ENCODE measurements at regions of chr5 and their contacts with region 1.

Region 1: GRCh38 chr5:172770675-172771438 is at the start of gene DUSP1:
- DNase-seq: peak; percentile 99
- ATAC-seq: peak; percentile 54
- H3K4me3 ChIP-seq: peak within 1 kb of the TSS; percentile 84 to 99 (median 99)
- H3K4me3 Mint-ChIP-seq: peak within 1 kb of the TSS; percentile 92
- H3K27ac ChIP-seq: peak within 1 kb of the TSS; percentile 100
- H3K27ac Mint-ChIP-seq: peak within 1 kb of the TSS; percentile 96
- H3K4me1 ChIP-seq: peaks cover 32 to 46% of the 10 kb centered on the region in 2 donors
- H3K4me1 Mint-ChIP-seq: peaks cover 70% of the 10 kb centered on the region
- H3K27me3 ChIP-seq: no peaks in the 10 kb centered on the region
- H3K27me3 Mint-ChIP-seq: no peaks in the 10 kb centered on the region
- CTCF ChIP-seq: peak; percentile 23
- total RNA-seq, gene DUSP1: 69.8 and 71.2 TPM in 2 replicates

Region 2: DNA sequence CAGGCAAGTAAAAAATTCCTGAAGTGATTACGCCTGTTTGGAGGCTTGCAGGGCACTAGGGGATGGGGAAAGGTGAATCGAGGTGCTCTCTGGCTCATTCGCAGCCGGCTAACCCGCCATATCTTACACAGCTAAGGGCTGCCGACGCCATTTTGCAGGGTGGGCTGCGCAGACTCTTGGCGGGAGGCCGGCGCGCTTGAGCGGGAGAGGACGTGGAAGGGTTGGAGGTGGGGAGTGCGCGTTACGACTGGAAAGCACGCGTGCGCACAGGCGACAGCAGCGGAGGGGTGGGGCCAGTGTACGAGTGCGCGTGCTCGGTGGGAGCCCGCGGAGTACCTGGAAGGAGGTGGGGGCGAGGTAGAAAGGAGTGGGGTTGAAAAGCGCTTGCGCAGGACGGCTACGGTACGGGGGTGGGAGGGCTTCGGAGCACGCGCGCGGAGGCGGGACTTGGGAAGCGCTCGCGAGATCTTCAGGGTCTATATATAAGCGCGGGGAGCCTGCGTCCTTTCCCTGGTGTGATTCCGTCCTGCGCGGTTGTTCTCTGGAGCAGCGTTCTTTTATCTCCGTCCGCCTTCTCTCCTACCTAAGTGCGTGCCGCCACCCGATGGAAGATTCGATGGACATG is 1383.4 kb before region 1 on chr5 and contains the start of gene NPM1:
- CTCF ChIA-PET with region 1: no interaction called
- POLR2A ChIA-PET with region 1: no interaction called
- intact Hi-C with region 1: loop called (anchors 10 kb)
- DNase-seq: peak; percentile 99
- ATAC-seq: peak; percentile 87
- H3K4me3 ChIP-seq: peak within 1 kb of the TSS; percentile 67 to 82 (median 75)
- H3K4me3 Mint-ChIP-seq: peak within 1 kb of the TSS; percentile 100
- H3K27ac ChIP-seq: peak within 1 kb of the TSS; percentile 74 to 87
- H3K27ac Mint-ChIP-seq: peak within 1 kb of the TSS; percentile 99
- H3K4me1 ChIP-seq: peaks cover 39 to 41% of the 10 kb centered on the region in 2 donors
- H3K4me1 Mint-ChIP-seq: peaks cover 51% of the 10 kb centered on the region
- H3K27me3 ChIP-seq: no peaks in the 10 kb centered on the region
- H3K27me3 Mint-ChIP-seq: peaks cover under 1% of the 10 kb centered on the region
- CTCF ChIP-seq: no peak
- total RNA-seq, gene NPM1: 819 and 920 TPM in 2 replicates

Region 3: DNA sequence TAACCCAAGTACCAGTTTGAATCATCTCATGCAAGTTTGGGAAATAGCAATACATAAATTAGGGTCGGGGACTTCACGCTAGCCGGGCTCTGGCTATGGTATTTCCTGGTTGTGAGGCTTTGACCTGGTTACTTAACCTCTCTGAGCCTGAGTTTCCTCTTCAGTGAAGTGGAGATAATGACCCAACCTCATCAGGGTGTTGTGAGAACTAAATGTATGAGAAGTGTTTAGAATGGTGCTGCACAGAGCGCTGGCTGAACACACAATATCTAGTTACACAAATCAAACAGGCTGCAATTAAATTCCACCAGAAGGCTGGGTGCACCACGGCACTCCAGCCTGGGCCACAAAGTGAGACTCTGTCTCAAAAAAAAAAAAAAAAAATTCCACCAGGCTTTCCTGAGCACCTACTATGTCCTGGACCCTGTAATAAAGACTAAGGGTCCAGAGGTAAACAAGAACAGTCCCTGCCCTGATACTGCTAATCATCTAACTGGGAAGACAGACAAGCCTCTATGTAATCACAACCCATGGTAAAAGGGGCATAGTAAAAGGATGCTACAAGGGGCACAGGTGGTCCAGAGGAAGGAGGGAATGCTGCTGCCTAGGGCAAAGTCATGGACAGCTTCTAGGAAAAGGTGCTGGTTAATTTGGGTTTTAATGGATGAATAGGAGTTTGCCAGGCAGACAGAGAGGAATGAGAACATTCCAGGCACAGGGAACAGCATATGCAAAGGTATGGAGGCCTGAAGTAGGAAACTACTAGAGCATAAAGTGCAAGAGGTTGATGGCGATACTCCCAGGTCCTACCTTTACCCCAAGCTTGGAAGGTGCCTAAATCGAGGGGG is 27.5 kb before region 1 on chr5:
- CTCF ChIA-PET with region 1: no interaction called
- POLR2A ChIA-PET with region 1: interaction called, 5 read pairs
- intact Hi-C with region 1: loop called (anchors 2 kb)
- DNase-seq: no peak
- ATAC-seq: no peak
- H3K4me3 ChIP-seq: no peak overlapping the region
- H3K4me3 Mint-ChIP-seq: peak overlapping the region; percentile 21
- H3K27ac ChIP-seq: no peak overlapping the region
- H3K27ac Mint-ChIP-seq: no peak overlapping the region
- H3K4me1 ChIP-seq: peaks cover 21 to 32% of the 10 kb centered on the region in 2 donors
- H3K4me1 Mint-ChIP-seq: peaks cover 30% of the 10 kb centered on the region
- H3K27me3 ChIP-seq: peaks cover 0 to 5% (median 0%) of the 10 kb centered on the region in 4 experiments
- H3K27me3 Mint-ChIP-seq: no peaks in the 10 kb centered on the region
- CTCF ChIP-seq: no peak

Region 4: GRCh38 chr5:172849606-172850453 is 79.0 kb after region 1 on chr5:
- CTCF ChIA-PET with region 1: interaction called, 40 read pairs
- POLR2A ChIA-PET with region 1: interaction called, 33 read pairs
- intact Hi-C with region 1: loop called (anchors 1 kb)
- DNase-seq: peak; percentile 93
- ATAC-seq: peak; percentile 84
- H3K4me3 ChIP-seq: peak overlapping the region in 4 of 5 experiments; percentile 11 to 40 (median 20)
- H3K4me3 Mint-ChIP-seq: peak overlapping the region; percentile 73
- H3K27ac ChIP-seq: peak overlapping the region; percentile 88 to 95
- H3K27ac Mint-ChIP-seq: peak overlapping the region; percentile 95
- H3K4me1 ChIP-seq: peaks cover 61 to 74% of the 10 kb centered on the region in 2 donors
- H3K4me1 Mint-ChIP-seq: peaks cover 80% of the 10 kb centered on the region
- H3K27me3 ChIP-seq: no peaks in the 10 kb centered on the region
- H3K27me3 Mint-ChIP-seq: no peaks in the 10 kb centered on the region
- CTCF ChIP-seq: no peak

Region 5: DNA sequence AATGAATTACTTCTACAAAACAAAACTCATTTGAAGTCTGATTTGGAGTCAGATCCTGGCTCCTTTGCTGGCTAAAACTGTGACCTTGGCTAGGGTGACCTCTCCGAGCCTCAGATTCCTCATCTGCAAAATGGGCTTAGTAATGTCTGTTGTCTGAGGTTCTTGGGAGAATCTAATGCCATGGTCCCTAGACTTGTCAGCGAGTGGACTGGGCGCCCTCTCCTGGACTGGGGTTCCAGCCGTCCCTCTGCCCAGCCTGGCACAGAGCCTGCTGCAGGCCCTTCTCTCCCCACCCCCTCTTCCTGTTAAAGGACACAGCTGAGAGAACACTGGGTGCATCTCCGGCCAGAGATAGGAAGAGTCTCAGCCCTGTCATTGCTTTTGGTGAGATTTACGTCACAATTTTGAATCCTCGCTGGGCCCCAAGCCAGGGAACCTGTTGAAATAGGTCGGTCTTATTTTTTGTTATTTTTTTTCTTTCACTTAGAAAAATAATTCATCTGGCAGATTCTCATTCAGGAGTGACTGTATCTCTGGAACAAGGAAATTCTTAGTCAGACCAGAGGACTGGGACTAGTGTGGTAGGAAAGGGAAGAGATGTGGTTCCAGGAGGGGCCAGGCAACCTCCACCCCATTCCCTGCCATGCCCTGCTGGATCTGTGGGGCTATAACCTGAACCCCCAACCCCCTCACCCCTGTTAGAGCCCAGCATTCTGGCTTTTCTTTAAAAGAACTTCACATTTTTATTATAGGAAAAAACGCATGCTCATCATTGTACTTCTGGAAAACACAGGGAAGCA is 140.2 kb after region 1 on chr5:
- CTCF ChIA-PET with region 1: interaction called, 12 read pairs
- POLR2A ChIA-PET with region 1: interaction called, 8 read pairs
- intact Hi-C with region 1: loop called (anchors 1 kb)
- DNase-seq: peak; percentile 73
- ATAC-seq: peak; percentile 83
- H3K4me3 ChIP-seq: no peak overlapping the region
- H3K4me3 Mint-ChIP-seq: peak overlapping the region; percentile 38
- H3K27ac ChIP-seq: peak overlapping the region; percentile 59 to 91
- H3K27ac Mint-ChIP-seq: peak overlapping the region; percentile 89
- H3K4me1 ChIP-seq: peaks cover 16 to 18% of the 10 kb centered on the region in 2 donors
- H3K4me1 Mint-ChIP-seq: peaks cover 20% of the 10 kb centered on the region
- H3K27me3 ChIP-seq: no peaks in the 10 kb centered on the region
- H3K27me3 Mint-ChIP-seq: no peaks in the 10 kb centered on the region
- CTCF ChIP-seq: no peak

Region 6: DNA sequence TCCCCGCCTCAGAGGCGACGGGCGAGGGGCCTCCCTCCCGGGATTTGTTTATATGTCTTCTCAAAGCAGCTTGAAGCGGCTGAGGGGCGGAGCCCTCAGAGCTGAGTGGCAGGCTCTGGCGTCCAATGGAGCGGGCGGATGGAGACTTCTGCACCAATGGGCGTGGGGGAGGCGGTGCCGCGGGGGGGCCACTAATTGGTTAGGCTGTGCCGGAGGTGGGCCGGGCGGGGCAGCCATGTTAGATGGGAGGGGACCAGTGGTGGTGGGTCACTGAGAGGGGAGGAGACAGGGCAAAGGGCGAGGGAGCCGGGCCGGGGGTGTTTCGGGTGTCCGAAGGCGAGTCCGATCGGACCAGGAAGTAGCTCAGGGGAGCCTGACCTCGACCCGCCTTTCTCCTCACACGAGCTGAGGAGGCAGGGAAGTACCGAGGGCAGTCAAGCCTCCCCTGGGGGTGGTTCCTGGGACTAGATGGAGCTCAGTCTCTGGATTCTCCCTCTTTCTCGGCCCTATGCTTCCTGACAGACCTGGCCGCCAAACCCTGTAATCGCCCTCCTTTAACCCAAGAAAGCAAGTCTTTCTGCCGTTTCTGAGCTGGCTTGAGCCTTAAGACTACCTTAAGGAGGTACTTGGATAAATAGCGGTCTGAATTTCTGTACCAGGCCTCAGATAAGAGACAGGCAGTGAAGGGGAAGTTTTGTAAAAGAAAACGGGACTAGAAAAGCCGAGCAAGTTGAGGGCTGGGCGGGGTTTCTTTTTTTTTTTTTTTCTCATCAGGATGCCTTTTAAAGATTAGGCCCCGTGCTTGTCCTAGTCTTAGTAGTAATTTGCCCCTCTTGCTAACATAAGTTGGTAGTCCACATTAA is 286.4 kb after region 1 on chr5:
- CTCF ChIA-PET with region 1: interaction called, 4 read pairs
- POLR2A ChIA-PET with region 1: interaction called, 4 read pairs
- intact Hi-C with region 1: loop called (anchors 1 kb)
- DNase-seq: peak; percentile 99
- ATAC-seq: peak; percentile 81
- H3K4me3 ChIP-seq: peak overlapping the region; percentile 81 to 97 (median 89)
- H3K4me3 Mint-ChIP-seq: peak overlapping the region; percentile 96
- H3K27ac ChIP-seq: peak overlapping the region; percentile 82 to 100
- H3K27ac Mint-ChIP-seq: peak overlapping the region; percentile 96
- H3K4me1 ChIP-seq: peaks cover 19 to 26% of the 10 kb centered on the region in 2 donors
- H3K4me1 Mint-ChIP-seq: peaks cover 47% of the 10 kb centered on the region
- H3K27me3 ChIP-seq: no peaks in the 10 kb centered on the region
- H3K27me3 Mint-ChIP-seq: no peaks in the 10 kb centered on the region
- CTCF ChIP-seq: no peak